Activated B cell treated with CpG ODN at 0.5 μM for 24 hours (primary cell): ENCODE measurements at regions of chr15 and their contacts with region 1.

Region 1: DNA sequence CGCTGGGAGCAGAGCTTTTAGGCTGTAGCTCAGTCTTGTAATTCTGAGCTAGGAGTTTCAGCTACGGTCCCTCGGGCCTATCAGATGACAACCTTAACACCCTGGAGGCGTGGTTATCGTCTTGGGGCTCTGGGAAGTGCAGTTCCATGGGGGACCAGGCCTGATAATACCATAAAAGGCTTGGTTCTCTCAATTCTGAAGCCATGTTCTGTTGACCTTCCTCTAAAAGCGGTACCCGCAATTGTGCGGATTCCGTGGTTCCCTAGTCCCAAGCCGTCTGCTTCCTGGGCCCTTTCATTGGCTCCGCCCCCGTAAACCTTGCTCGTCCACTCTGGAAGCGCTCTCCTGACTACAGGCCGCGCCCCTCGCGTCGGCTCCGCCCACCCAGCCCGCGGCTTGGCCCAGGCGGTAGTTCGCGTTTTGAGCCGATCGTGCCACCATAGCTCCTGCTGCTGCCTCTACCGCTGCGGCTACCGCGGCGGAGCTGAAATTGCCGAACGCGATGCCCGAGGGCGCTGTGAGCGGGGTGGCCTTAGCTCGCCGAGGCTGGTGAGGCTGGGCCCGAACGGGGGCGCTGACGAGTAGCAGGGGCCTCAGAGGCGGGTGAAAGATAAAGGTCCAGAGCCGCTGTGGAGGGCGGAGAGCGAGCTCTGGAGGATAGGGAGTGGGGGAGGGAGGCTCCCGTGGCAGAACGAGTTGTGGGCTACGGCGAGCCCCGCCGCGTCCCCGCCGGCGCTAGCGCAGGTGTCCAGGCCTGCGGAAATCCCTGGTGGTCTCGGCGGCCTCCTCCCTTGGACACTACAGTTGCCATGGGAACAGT is at the start of gene MAPKBP1:
- DNase-seq: peak; percentile 98
- ATAC-seq: peak; percentile 92
- H3K4me3 Mint-ChIP-seq: peak within 1 kb of the TSS; percentile 93
- H3K27ac Mint-ChIP-seq: peak within 1 kb of the TSS; percentile 94
- H3K4me1 Mint-ChIP-seq: peaks cover 56% of the 10 kb centered on the region
- H3K27me3 Mint-ChIP-seq: no peaks in the 10 kb centered on the region
- CTCF ChIP-seq: no peak
- total RNA-seq, gene MAPKBP1: 31.3 and 42.3 TPM in 2 replicates

Region 2: GRCh38 chr15:41660235-41661077 is 113.8 kb before region 1 on chr15 and contains the start of gene MGA:
- CTCF ChIA-PET with region 1: no interaction called
- POLR2A ChIA-PET with region 1: interaction called, 7 read pairs
- intact Hi-C with region 1: loop called (anchors 1 kb)
- DNase-seq: peak; percentile 92
- ATAC-seq: peak; percentile 84
- H3K4me3 Mint-ChIP-seq: peak within 1 kb of the TSS; percentile 91
- H3K27ac Mint-ChIP-seq: peak within 1 kb of the TSS; percentile 91
- H3K4me1 Mint-ChIP-seq: peaks cover 51% of the 10 kb centered on the region
- H3K27me3 Mint-ChIP-seq: peaks cover 2% of the 10 kb centered on the region
- CTCF ChIP-seq: no peak
- total RNA-seq, gene MGA: 49.9 and 58.3 TPM in 2 replicates

Region 3: DNA sequence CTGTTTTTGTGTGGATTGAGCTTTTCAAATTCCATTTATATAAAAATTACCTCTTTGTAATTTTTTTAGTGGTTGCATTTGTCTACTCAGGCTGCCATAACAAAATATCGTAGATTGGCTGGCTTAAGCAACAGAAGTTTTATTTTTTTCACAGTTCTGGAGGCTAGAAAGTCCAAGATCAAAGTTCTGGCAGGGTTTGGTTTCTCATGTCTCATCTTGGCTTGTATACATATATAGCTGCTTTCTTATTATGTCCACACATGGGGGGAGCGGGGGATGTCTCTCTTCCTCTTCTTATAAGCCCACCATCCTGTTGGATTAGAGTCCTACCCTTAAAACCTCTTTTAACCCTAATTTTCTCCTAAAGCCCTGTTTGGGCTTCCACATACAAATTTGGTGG is 85.6 kb before region 1 on chr15:
- CTCF ChIA-PET with region 1: no interaction called
- POLR2A ChIA-PET with region 1: no interaction called
- intact Hi-C with region 1: no loop called
- DNase-seq: no peak
- ATAC-seq: no peak
- H3K4me3 Mint-ChIP-seq: no peak overlapping the region
- H3K27ac Mint-ChIP-seq: no peak overlapping the region
- H3K4me1 Mint-ChIP-seq: peaks cover 63% of the 10 kb centered on the region
- H3K27me3 Mint-ChIP-seq: no peaks in the 10 kb centered on the region
- CTCF ChIP-seq: no peak

Region 4: GRCh38 chr15:41727143-41727542 is 47.1 kb before region 1 on chr15:
- CTCF ChIA-PET with region 1: no interaction called
- POLR2A ChIA-PET with region 1: no interaction called
- intact Hi-C with region 1: no loop called
- DNase-seq: no peak
- ATAC-seq: no peak
- H3K4me3 Mint-ChIP-seq: no peak overlapping the region
- H3K27ac Mint-ChIP-seq: no peak overlapping the region
- H3K4me1 Mint-ChIP-seq: peaks cover 13% of the 10 kb centered on the region
- H3K27me3 Mint-ChIP-seq: no peaks in the 10 kb centered on the region
- CTCF ChIP-seq: no peak

Region 5: DNA sequence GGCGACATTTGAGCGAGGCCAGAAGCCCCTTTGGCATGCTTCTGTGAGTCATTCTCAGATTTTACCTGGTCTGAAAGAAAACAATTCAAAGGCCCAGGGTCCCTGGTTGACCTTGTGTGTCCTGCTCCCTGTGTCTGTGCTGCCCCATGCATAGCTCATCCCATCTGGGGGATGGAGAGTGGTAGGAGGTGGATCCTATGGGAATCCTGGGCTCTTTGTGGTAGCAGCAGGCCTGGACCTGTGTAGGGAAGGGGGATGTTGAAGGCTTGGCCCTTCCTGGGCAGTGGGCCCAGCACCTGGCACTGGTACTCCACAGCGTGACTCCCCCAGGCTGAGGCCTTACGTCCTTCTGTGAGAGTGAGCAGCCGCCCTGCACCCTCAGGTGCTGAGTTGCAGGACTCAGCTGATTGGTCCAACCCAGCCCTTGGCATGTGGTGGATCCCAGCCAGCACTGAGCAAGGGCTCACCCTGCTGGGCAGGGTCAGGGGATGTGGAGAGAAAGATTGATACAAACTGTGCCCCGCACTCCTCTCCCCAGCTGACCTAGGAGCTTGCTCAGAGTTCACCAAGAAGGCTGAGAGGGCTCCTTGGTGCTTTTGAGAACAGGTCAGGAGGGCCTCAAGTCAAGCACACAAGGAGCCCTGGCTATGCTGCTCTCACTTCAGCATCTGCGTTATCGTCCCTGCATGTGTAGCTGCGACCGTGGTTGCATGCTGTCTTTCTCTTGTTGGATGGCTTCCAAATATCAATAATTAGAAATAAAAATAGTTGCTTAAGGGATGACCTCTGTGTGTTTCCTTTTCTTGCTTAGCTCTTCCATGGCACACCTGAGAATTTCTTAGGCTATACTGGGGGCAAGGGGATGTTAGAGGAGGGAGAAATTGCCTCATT is 32.3 kb after region 1 on chr15:
- CTCF ChIA-PET with region 1: interaction called, 309 read pairs
- POLR2A ChIA-PET with region 1: interaction called, 49 read pairs
- intact Hi-C with region 1: loop called (anchors 1 kb)
- DNase-seq: no peak
- ATAC-seq: no peak
- H3K4me3 Mint-ChIP-seq: no peak overlapping the region
- H3K27ac Mint-ChIP-seq: no peak overlapping the region
- H3K4me1 Mint-ChIP-seq: peaks cover 10% of the 10 kb centered on the region
- H3K27me3 Mint-ChIP-seq: no peaks in the 10 kb centered on the region
- CTCF ChIP-seq: no peak

Region 6: GRCh38 chr15:41894791-41895463 is 120.7 kb after region 1 on chr15:
- CTCF ChIA-PET with region 1: interaction called, 4 read pairs
- POLR2A ChIA-PET with region 1: interaction called, 11 read pairs
- intact Hi-C with region 1: no loop called
- DNase-seq: peak; percentile 68
- ATAC-seq: peak; percentile 99
- H3K4me3 Mint-ChIP-seq: peak overlapping the region; percentile 79
- H3K27ac Mint-ChIP-seq: peak overlapping the region; percentile 81
- H3K4me1 Mint-ChIP-seq: peaks cover 44% of the 10 kb centered on the region
- H3K27me3 Mint-ChIP-seq: no peaks in the 10 kb centered on the region
- CTCF ChIP-seq: no peak

Region 7: DNA sequence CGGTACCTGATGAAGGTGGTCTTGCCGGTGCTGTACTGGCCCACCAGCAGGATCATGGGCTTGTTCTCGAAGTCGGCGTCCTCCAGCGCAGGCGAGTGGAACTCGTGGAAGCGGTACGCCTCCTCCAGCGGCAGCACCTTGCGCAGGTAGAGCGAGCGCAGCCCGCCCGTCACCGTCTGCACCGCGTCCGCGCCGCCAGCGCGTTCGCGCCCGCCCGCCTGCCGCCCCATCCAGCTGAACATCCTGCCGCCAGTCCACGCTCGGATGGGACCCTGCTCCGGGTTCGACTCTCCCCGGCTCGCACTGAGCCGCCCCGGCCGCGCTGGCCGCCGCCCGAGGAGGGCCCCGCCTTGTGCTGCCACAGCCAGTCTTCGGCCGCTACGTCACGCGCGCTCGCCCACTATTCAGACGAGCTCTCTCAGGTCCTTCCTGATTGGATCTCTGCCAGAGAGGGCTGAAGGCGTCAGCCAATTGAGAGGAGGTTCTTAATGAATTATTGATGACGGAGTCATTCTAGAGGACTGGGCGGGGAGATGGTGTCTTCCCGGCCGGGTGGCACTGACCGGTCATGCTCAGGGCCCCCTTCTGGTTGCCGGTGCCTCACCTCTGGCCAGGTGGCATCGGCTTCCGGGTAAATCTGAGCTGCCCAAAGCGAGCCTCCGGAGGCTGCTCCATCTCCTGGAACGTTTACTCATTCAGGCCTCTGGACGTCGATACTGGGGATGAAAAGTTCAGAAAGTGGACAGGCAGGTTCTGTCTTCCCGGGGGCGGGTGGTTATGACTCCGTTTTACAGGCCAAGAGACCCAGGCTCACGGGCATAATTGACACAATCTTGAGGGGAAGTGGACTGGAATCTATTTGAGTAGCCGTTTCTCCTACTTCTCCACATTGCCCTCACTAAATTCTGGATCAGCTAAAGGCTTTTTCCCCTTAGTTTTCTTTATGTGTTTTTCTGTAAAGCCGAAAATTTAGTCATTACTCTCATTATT is 198.3 kb after region 1 on chr15 and contains the start of gene EHD4:
- CTCF ChIA-PET with region 1: interaction called, 7 read pairs
- POLR2A ChIA-PET with region 1: interaction called, 20 read pairs
- intact Hi-C with region 1: loop called (anchors 1 kb)
- DNase-seq: peak; percentile 88
- ATAC-seq: peak; percentile 84
- H3K4me3 Mint-ChIP-seq: peak within 1 kb of the TSS; percentile 93
- H3K27ac Mint-ChIP-seq: peak within 1 kb of the TSS; percentile 90
- H3K4me1 Mint-ChIP-seq: peaks cover 46% of the 10 kb centered on the region
- H3K27me3 Mint-ChIP-seq: peaks cover 7% of the 10 kb centered on the region
- CTCF ChIP-seq: no peak
- total RNA-seq, gene EHD4: 38.4 and 42.6 TPM in 2 replicates

Region 8: DNA sequence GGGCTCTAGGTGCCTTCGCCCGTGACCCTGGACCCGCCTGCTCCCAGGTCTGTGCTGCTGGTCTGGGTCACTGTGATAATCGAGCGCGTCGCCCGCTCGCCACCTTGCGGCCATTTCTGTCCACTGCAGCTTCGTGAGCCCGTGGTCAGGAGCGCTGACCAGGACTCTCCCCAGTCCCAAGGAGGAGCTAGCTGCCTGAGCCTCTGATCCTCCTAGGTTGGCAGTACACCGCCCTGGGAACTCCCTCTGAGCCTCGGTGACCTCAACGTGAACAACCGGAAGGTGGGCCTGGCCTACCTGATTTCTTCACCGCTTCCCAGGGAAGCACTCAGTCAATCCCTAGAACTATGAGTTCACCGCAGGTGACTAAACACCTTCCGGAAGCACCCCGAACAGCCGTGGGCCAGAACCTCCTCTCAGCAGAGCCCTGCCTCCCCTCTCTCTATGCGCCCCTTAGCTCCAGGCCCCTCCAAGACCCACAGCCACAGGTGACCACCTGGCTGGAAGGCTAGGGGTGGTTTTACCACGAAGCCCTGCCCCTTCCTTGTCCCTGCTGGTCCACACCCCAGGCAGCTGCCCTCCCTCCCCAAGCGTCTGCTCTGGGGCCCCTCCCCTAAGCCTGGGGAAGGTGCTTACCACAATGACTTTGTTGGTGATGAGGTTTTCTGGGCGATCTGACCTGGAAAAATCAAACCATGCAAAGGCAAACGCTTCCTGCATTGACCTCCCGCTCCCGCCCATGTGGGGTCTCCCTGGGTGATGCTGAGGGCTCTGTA is 310.4 kb after region 1 on chr15:
- CTCF ChIA-PET with region 1: interaction called, 12 read pairs
- POLR2A ChIA-PET with region 1: no interaction called
- intact Hi-C with region 1: loop called (anchors 1 kb)
- DNase-seq: peak; percentile 49
- ATAC-seq: peak; percentile 82
- H3K4me3 Mint-ChIP-seq: no peak overlapping the region
- H3K27ac Mint-ChIP-seq: no peak overlapping the region
- H3K4me1 Mint-ChIP-seq: peaks cover 2% of the 10 kb centered on the region
- H3K27me3 Mint-ChIP-seq: peaks cover 14% of the 10 kb centered on the region
- CTCF ChIP-seq: peak; percentile 26